Calu3 (cell line): ENCODE measurements at regions of chr19 and their contacts with region 1.

Region 1: DNA sequence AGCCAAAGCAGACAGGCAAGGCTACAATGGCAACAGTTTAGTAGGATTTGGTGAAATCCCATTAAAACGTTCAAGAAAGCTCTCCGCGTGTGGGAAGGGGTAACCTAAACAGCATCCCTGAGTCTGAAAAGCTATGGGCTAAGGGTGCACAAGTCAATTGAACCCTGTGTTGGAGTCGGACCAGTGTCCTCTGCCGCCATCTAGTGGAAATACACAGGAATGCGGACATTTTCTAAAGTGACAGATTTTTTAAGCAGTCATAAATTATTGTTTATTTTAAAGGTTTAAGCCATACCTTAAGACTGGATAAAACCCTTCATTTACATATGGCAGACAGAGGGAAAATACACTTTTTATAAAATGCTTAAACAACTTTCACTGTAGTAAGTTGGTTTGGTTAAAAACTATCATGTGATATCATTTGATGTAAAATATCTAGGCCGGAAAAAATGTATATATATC is 26.5 kb upstream of the LSM14A start:
- DNase-seq: peak; percentile 56
- H3K4me3 Mint-ChIP-seq: no peak overlapping the region
- H3K27ac Mint-ChIP-seq: no peak overlapping the region
- H3K4me1 Mint-ChIP-seq: no peaks in the 10 kb centered on the region
- H3K27me3 Mint-ChIP-seq: no peaks in the 10 kb centered on the region
- CTCF ChIP-seq: peak; percentile 83

Region 2: DNA sequence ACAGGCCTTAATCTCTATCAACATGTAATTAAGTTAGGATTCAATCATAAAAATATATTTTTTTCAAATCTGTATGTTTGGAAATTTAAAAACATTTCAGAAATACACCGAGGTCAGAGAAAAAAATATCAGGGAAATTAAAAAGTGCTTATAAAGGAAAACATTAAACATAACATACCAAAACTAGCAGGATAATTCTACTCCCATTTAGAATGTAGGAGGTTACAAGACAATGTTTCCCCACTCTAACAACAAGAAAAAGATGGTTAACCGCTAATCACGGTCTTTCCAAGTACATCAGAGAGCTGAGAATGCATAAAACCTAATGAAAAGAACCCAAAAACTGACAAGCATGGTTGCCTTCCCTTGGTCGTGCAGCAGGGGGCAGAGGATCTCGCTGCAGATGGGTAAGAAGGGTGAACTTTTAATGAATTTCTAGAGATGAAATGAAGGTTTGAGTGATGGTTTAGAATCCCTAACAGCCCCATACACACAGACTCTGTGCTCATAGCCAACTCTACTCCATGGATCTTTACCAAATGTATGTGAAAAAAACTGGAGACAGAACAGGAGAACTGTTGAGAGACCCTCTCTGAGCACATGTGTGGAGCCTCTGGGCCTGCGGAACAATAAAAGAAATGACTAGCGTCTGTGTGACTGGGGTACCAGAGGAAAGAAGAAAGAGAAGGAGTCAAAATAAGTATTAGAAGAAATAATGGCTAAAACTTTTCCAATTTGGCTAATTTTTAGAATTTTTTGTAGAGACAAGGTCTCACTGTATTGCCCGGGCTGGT is 24.7 kb before region 1 on chr19:
- CTCF ChIA-PET with region 1: interaction called, 4 read pairs
- intact Hi-C with region 1: loop called (anchors 1 kb)
- DNase-seq: peak; percentile 62
- H3K4me3 Mint-ChIP-seq: no peak overlapping the region
- H3K27ac Mint-ChIP-seq: no peak overlapping the region
- H3K4me1 Mint-ChIP-seq: no peaks in the 10 kb centered on the region
- H3K27me3 Mint-ChIP-seq: peaks cover 81% of the 10 kb centered on the region
- CTCF ChIP-seq: peak; percentile 87